HepG2 (cell line): ENCODE measurements at regions of chr7 and their contacts with region 1.

Region 1: DNA sequence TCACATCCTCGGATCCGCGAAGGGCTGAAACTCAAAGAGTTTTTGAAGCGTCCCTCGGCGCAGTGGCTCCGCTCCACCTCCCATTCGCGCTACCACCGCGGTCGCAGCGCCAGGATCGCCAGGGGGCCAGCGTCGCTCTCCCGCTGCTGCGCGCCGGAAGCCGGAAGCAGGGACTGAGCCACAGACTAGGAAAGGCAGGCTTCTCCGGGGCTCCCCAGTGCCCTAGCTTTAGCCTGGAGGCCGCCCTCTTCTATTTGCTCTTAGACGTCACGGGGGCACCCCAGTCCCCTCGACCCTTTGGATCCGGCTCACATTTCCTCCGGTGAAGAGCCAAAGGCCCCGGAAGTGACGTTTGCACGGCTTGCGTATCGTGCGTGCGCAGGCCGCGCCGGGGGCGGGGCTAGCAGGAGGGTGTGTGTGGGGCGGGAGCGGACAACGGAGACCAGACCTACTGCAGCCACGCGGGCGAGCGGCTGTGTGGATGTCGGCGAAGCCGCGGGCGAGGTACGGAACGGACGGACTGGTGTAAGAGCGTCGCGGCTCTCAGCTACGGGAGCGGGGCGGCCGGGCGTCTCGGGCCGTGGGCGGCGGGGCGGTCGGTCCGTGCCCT is 25.5 kb downstream of the KCTD7 start:
- DNase-seq: peak; percentile 99
- ATAC-seq: peak; percentile 94
- H3K4me3 ChIP-seq: peak overlapping the region; percentile 83 to 94 (median 91); a peak in 5 of 6 replicates
- H3K27ac ChIP-seq: peak overlapping the region; percentile 94
- H3K4me1 ChIP-seq: peaks cover 21% of the 10 kb centered on the region
- H3K27me3 ChIP-seq: no peaks in the 10 kb centered on the region
- CTCF ChIP-seq: peak; percentile 67
- EP300 ChIP-seq: peak in 1 of 2 experiments; percentile 39; a peak in 1 of 4 replicates
- POLR2A ChIP-seq: peak; percentile 95 to 98
- RAD21 ChIP-seq: no peak

Region 2: DNA sequence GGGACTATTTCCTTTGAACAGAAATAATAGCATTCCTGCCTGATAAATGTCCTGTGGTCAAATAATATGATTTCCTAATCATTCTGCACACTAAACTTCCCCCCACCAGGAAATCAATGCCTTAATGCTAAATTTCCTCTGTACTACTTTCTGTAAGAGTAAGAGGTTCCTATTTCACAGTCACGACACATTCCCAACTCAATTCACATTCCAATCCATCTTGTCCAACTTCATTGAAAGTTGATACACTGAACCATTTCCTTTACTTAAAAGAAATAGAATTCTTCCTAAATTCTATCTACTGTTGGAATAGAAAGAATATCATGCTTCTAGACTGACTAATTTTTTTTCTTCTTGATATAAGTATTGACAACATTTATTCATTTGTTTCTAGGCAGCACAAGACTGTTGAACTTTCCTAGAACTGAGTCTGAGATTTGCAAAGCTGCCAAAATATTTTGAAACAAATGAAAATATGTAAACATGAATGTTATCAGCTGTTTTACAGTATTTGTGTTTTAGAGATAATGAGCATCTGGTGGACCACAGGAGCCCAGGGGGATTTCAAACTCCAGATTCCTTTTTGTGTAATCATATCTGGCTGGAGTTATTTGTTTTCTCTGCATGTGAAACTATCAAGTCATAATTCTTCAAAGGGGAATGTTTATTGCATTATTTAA is 327.6 kb before region 1 on chr7:
- CTCF ChIA-PET with region 1: no interaction called
- POLR2A ChIA-PET with region 1: no interaction called
- in situ Hi-C with region 1: no loop called
- intact Hi-C with region 1: no loop called
- DNase-seq: no peak
- ATAC-seq: no peak
- H3K4me3 ChIP-seq: no peak overlapping the region
- H3K27ac ChIP-seq: no peak overlapping the region
- H3K4me1 ChIP-seq: peaks cover 9% of the 10 kb centered on the region
- H3K27me3 ChIP-seq: no peaks in the 10 kb centered on the region
- CTCF ChIP-seq: no peak
- EP300 ChIP-seq: no peak
- POLR2A ChIP-seq: no peak
- RAD21 ChIP-seq: no peak

Region 3: DNA sequence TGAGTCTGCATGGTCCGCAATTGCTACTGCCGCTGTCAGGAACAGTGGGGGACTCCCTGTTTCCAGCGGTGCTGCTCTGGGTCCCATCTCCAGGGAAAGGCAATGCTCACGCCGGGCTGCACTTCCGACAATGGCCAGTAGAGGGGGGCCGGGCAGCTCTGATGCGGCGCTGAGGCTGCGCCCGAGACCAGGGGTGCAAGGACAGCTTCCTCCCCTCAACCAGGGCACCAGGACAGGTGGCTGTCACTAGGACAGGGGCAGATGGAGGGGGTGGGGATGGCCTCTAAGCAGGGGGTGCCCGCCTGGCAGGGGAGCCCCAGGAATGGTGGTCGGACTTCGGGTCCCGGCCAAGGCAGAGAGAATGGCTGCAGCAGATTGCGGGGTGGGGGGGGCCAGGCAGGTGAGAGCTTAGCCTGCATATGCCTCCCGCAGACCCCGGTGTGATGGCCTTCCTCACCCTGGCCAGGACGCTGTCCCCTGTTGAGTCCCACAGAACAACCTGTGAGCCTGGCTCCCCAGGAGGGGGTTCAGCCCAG is 96.6 kb before region 1 on chr7:
- CTCF ChIA-PET with region 1: no interaction called
- POLR2A ChIA-PET with region 1: interaction called, 3 read pairs
- in situ Hi-C with region 1: no loop called
- intact Hi-C with region 1: loop called (anchors 10 kb)
- DNase-seq: no peak
- ATAC-seq: peak; percentile 86
- H3K4me3 ChIP-seq: no peak overlapping the region
- H3K27ac ChIP-seq: no peak overlapping the region
- H3K4me1 ChIP-seq: no peaks in the 10 kb centered on the region
- H3K27me3 ChIP-seq: no peaks in the 10 kb centered on the region
- CTCF ChIP-seq: peak; percentile 94
- EP300 ChIP-seq: no peak
- POLR2A ChIP-seq: no peak
- RAD21 ChIP-seq: peak; percentile 89

Region 4: GRCh38 chr7:66642186-66642585 is 12.0 kb before region 1 on chr7:
- CTCF ChIA-PET with region 1: no interaction called
- POLR2A ChIA-PET with region 1: interaction called, 10 read pairs
- in situ Hi-C with region 1: no loop called
- intact Hi-C with region 1: no loop called
- DNase-seq: no peak
- ATAC-seq: no peak
- H3K4me3 ChIP-seq: no peak overlapping the region
- H3K27ac ChIP-seq: peak overlapping the region; percentile 56
- H3K4me1 ChIP-seq: peaks cover 29% of the 10 kb centered on the region
- H3K27me3 ChIP-seq: no peaks in the 10 kb centered on the region
- CTCF ChIP-seq: no peak
- EP300 ChIP-seq: no peak
- POLR2A ChIP-seq: no peak
- RAD21 ChIP-seq: no peak

Region 5: GRCh38 chr7:66669088-66669487 is 14.9 kb after region 1 on chr7:
- CTCF ChIA-PET with region 1: no interaction called
- POLR2A ChIA-PET with region 1: interaction called, 13 read pairs
- in situ Hi-C with region 1: no loop called
- intact Hi-C with region 1: no loop called
- DNase-seq: peak; percentile 31
- ATAC-seq: peak; percentile 19
- H3K4me3 ChIP-seq: no peak overlapping the region
- H3K27ac ChIP-seq: peak overlapping the region; percentile 45
- H3K4me1 ChIP-seq: peaks cover 33% of the 10 kb centered on the region
- H3K27me3 ChIP-seq: no peaks in the 10 kb centered on the region
- CTCF ChIP-seq: no peak
- EP300 ChIP-seq: no peak
- POLR2A ChIP-seq: no peak
- RAD21 ChIP-seq: no peak

Region 6: GRCh38 chr7:66720561-66720960 is 66.3 kb after region 1 on chr7:
- CTCF ChIA-PET with region 1: no interaction called
- POLR2A ChIA-PET with region 1: no interaction called
- in situ Hi-C with region 1: no loop called
- intact Hi-C with region 1: no loop called
- DNase-seq: no peak
- ATAC-seq: no peak
- H3K4me3 ChIP-seq: no peak overlapping the region
- H3K27ac ChIP-seq: no peak overlapping the region
- H3K4me1 ChIP-seq: peaks cover 20% of the 10 kb centered on the region
- H3K27me3 ChIP-seq: no peaks in the 10 kb centered on the region
- CTCF ChIP-seq: no peak
- EP300 ChIP-seq: no peak
- POLR2A ChIP-seq: no peak
- RAD21 ChIP-seq: no peak